Transverse colon (tissue), 4 donors: ENCODE measurements at regions of chr1 and their contacts with region 1.

Region 1: DNA sequence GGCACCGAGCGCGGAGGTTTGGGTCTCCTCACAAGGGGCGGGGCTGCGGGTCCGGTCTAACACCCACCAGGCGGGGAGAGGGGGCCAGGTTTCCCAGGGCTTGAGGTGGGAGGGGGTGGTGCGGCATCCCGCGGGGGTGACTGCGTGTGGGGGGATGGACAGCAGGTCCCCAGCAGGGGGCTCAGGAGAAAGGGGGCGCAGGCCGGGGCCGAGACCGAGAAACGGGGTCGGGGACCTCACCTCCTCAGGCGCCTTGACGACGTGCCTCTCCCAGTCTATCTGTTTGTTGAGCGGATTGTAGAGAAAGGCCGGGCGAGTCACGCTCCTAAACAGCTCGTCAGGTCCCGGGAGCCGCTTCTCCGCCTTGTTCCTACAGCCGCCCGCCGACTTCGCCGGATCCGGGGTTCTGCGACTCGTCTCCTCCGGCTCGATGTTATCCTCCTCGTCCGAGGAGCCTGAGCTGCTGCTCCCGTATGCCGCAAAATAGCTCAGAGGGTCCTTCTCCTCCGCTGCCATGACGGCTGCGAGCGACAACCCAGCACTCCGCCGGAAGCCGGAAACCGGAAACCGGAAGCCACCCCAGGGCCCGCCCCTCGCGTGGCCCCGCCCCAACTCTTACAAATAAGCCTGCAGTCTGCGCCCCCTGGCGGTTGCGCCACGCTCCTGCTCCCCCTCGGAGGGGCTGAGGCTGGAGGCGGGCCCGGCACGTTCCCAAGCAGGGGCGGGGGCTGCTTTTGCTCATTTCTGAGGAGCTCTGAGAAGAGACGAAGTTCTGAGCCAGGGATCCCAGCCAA is at the start of gene C1orf52:
- DNase-seq: peak; percentile 95
- H3K4me3 ChIP-seq: peak within 1 kb of the TSS; percentile 64 to 94 (median 81)
- H3K27ac ChIP-seq: peak within 1 kb of the TSS; percentile 80 to 91 (median 88)
- H3K4me1 ChIP-seq: peaks cover 9 to 42% (median 28%) of the 10 kb centered on the region in 4 donors
- H3K27me3 ChIP-seq: no peaks in the 10 kb centered on the region
- CTCF ChIP-seq: peak; percentile 97 to 100 (median 99)
- EP300 ChIP-seq: no peak
- POLR2A ChIP-seq: peak; percentile 82
- total RNA-seq, gene C1orf52: 7.4 to 42.6 (median 14.9) TPM

Region 2: GRCh38 chr1:84690397-84691121 is 568.8 kb before region 1 on chr1 and contains the start of gene SSX2IP:
- in situ Hi-C with region 1: loop called in 1 of 4 experiments (anchors 25 kb)
- intact Hi-C with region 1: no loop called
- DNase-seq: peak; percentile 100
- H3K4me3 ChIP-seq: peak within 1 kb of the TSS; percentile 84 to 90 (median 85)
- H3K27ac ChIP-seq: peak within 1 kb of the TSS; percentile 88 to 95 (median 92)
- H3K4me1 ChIP-seq: peaks cover 0 to 28% (median 14%) of the 10 kb centered on the region in 4 donors
- H3K27me3 ChIP-seq: no peaks in the 10 kb centered on the region
- CTCF ChIP-seq: no peak
- EP300 ChIP-seq: no peak
- POLR2A ChIP-seq: peak; percentile 51
- total RNA-seq, gene SSX2IP: 7.1 to 15.2 (median 11.4) TPM

Region 3: GRCh38 chr1:85109475-85109874 is 149.8 kb before region 1 on chr1:
- in situ Hi-C with region 1: loop called in 3 of 4 experiments (anchors 5 to 10 kb)
- intact Hi-C with region 1: loop called (anchors 2 kb)
- DNase-seq: peak; percentile 65
- H3K4me3 ChIP-seq: no peak overlapping the region
- H3K27ac ChIP-seq: no peak overlapping the region
- H3K4me1 ChIP-seq: no peaks in the 10 kb centered on the region
- H3K27me3 ChIP-seq: no peaks in the 10 kb centered on the region
- CTCF ChIP-seq: peak; percentile 72 to 87 (median 84)
- EP300 ChIP-seq: no peak
- POLR2A ChIP-seq: no peak

Region 4: GRCh38 chr1:85116856-85117255 is 142.5 kb before region 1 on chr1:
- in situ Hi-C with region 1: loop called in 2 of 4 experiments (anchors 5 to 10 kb)
- intact Hi-C with region 1: no loop called
- DNase-seq: no peak
- H3K4me3 ChIP-seq: no peak overlapping the region
- H3K27ac ChIP-seq: no peak overlapping the region
- H3K4me1 ChIP-seq: peaks cover 0 to 8% (median 1%) of the 10 kb centered on the region in 4 donors
- H3K27me3 ChIP-seq: no peaks in the 10 kb centered on the region
- CTCF ChIP-seq: no peak
- EP300 ChIP-seq: no peak
- POLR2A ChIP-seq: no peak

Region 5: DNA sequence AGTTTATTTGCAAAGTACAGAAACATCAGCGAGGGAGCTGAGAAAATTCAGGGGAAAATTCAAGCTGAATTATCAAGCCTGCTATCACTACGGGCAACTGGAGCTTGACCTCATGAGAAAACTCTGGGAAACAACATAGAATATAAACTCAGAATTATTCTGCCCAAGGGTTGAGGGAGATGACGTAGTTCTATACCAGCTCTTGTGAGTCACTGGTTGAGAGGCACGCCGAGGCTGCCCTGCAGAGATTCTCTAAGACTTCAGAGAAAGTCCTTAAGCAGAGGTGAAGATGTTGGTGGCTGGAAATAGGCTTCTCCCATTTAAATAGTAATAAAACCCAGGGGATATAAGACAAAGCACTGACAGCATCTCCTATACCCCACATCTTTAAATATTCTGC is 70.8 kb before region 1 on chr1:
- in situ Hi-C with region 1: no loop called
- intact Hi-C with region 1: no loop called
- DNase-seq: no peak
- H3K4me3 ChIP-seq: no peak overlapping the region
- H3K27ac ChIP-seq: peak overlapping the region in 3 of 4 donors; percentile 9 to 27 (median 16)
- H3K4me1 ChIP-seq: no peaks in the 10 kb centered on the region
- H3K27me3 ChIP-seq: no peaks in the 10 kb centered on the region
- CTCF ChIP-seq: no peak
- EP300 ChIP-seq: no peak
- POLR2A ChIP-seq: no peak